PC-3 (cell line): ENCODE measurements at regions of chr9 and their contacts with region 1.

Region 1: GRCh38 chr9:120985810-120986222 is 59.2 kb upstream of the TRAF1 start:
- DNase-seq: peak; percentile 75
- ATAC-seq: peak; percentile 87
- H3K4me3 ChIP-seq: no peak overlapping the region
- H3K27ac ChIP-seq: no peak overlapping the region
- H3K4me1 ChIP-seq: no peaks in the 10 kb centered on the region; the same call in 1 of the 2 replicates
- H3K27me3 ChIP-seq: no peaks in the 10 kb centered on the region
- CTCF ChIP-seq: peak; percentile 75

Region 2: DNA sequence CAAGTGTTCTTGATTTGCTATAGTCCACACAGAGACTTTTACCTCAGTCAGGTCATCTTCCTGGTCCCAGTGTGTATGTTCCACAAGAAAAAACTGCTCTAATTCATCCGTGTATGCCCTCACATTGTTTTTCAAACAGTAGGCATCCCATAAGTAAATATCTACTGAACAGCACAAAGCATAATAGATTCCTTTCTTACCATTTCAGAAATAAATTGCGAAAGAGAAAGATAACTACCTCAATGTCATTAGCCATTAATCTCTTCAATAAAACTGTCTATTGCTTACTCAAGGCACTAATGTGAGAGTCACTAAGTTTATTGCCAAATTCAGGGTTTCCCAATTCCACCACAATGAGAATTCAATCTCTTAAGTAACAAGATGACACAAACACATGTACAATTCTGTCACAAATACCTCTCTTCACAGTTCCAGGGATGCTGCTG is 202.2 kb before region 1 on chr9:
- CTCF ChIA-PET with region 1: no interaction called
- POLR2A ChIA-PET with region 1: no interaction called
- intact Hi-C with region 1: no loop called
- DNase-seq: peak; percentile 62
- ATAC-seq: peak; percentile 40
- H3K4me3 ChIP-seq: no peak overlapping the region
- H3K27ac ChIP-seq: peak overlapping the region; percentile 50
- H3K4me1 ChIP-seq: peaks cover 6% of the 10 kb centered on the region; the same call in 1 of the 2 replicates
- H3K27me3 ChIP-seq: no peaks in the 10 kb centered on the region
- CTCF ChIP-seq: no peak

Region 3: DNA sequence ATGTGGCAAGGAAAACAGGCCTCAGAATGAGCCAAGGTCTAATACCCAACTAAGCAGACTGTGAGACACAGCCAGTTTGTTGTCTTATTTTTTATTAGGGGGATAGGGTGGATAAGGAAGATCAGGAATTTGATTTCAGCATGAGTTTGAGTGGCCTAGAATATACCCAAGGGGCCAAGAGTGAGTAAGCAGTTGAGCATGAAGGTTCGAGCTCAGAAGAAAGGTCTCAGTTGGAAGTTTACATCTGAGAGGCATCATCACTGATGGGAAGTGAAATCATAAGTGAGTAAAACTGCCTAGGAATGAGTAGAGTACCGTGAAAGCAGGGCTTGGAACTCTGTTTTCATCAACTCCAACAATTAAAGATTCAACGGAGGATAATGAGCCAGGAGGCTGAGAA is 155.7 kb before region 1 on chr9:
- CTCF ChIA-PET with region 1: no interaction called
- POLR2A ChIA-PET with region 1: no interaction called
- intact Hi-C with region 1: no loop called
- DNase-seq: no peak
- ATAC-seq: no peak
- H3K4me3 ChIP-seq: no peak overlapping the region
- H3K27ac ChIP-seq: no peak overlapping the region
- H3K4me1 ChIP-seq: no peaks in the 10 kb centered on the region
- H3K27me3 ChIP-seq: no peaks in the 10 kb centered on the region
- CTCF ChIP-seq: no peak

Region 4: DNA sequence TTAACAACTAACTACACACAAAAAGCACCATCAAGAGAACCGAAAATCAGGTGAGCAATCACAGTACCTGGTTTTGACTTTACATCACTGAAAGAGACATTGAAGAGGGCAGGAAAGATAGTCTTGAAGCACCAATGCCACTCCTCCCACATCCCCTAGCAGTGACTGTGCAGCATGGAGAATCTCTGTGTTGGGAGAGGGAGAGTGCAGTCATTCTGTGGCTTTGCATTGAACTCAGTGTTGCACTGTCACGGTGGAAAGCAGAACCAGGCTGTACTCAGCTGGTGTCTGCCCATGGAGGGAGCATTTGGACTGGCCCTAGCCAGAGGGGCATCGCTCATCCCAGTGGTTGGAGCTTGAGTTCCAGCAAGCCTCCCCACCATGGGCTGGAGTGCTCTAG is 23.8 kb after region 1 on chr9:
- CTCF ChIA-PET with region 1: no interaction called
- POLR2A ChIA-PET with region 1: no interaction called
- intact Hi-C with region 1: no loop called
- DNase-seq: no peak
- ATAC-seq: no peak
- H3K4me3 ChIP-seq: no peak overlapping the region
- H3K27ac ChIP-seq: no peak overlapping the region
- H3K4me1 ChIP-seq: no peaks in the 10 kb centered on the region
- H3K27me3 ChIP-seq: no peaks in the 10 kb centered on the region
- CTCF ChIP-seq: no peak

Region 5: DNA sequence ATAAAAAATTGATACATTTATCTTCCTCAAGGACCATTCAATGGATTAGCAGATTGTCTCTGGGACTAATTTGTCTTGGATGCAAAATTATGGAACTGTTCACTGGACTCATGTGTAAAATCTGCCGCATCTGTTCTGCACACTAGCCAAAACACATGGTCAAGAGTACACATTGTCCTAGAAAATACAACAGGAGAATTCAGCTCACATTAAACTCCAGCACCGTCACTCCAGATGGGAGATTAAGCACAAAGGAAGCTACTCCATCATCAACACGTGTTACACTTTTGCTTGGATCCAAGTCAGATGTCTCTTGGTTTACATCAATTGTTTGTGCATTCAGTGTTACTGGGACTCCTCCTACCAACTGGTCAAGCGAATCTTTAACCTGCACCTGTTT is 35.5 kb after region 1 on chr9:
- CTCF ChIA-PET with region 1: no interaction called
- POLR2A ChIA-PET with region 1: no interaction called
- intact Hi-C with region 1: loop called (anchors 2 kb)
- DNase-seq: no peak
- ATAC-seq: no peak
- H3K4me3 ChIP-seq: no peak overlapping the region
- H3K27ac ChIP-seq: no peak overlapping the region
- H3K4me1 ChIP-seq: peaks cover 18% of the 10 kb centered on the region
- H3K27me3 ChIP-seq: no peaks in the 10 kb centered on the region
- CTCF ChIP-seq: no peak

Region 6: DNA sequence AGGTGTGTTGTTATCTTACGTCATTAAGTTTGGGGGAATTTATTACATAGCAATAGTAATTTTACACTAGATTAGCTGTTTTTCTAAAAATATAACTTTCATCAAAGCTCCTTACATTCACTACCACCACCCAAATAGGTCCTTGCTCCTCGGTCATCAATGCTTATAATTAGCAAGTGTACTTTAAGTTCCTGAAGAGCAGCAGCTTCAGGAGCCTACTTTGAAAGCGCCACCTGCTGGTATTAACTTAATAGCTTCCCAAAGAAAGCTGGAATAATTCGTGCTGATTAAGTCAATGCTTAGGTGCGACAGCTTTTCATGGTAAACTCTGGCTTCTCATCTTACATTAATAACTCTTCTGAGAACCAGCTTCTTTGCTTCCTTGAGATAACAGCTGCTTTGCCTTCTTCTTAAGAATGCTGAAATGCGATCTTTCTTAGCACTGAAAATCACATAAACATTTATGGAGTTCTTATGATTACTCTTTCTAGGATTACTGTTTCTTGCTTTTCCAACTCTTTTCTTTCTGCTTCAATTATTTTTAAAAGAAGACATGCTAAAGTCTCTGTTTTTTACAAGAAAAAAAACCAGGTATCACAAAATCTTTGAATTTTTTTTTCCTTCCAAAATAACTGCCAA is 74.3 kb after region 1 on chr9:
- CTCF ChIA-PET with region 1: interaction called, 18 read pairs
- POLR2A ChIA-PET with region 1: interaction called, 5 read pairs
- intact Hi-C with region 1: loop called (anchors 1 kb)
- DNase-seq: peak; percentile 81
- ATAC-seq: peak; percentile 67
- H3K4me3 ChIP-seq: no peak overlapping the region
- H3K27ac ChIP-seq: no peak overlapping the region
- H3K4me1 ChIP-seq: no peaks in the 10 kb centered on the region
- H3K27me3 ChIP-seq: no peaks in the 10 kb centered on the region
- CTCF ChIP-seq: peak; percentile 78

Region 7: DNA sequence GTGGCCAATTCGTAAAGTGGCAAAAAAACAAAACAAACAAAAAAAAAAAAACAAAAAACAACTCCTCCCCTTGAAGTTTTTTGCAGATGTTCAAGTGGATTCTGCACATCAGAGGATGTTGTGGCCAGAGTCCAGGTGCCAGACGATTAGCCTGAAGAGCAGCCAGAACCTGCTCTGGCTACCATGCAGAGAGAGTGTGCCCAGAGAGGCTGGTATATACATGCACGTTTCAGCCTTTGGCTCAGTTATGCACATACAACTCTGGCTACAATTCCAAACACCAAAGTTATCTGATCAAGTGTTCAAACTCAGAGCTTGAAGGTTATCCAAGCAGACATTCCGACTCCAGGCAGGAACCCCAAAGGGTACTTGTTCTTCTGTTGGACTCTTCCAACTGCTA is 479.2 kb after region 1 on chr9:
- CTCF ChIA-PET with region 1: no interaction called
- POLR2A ChIA-PET with region 1: no interaction called
- intact Hi-C with region 1: no loop called
- DNase-seq: no peak
- ATAC-seq: no peak
- H3K4me3 ChIP-seq: no peak overlapping the region
- H3K27ac ChIP-seq: no peak overlapping the region
- H3K4me1 ChIP-seq: no peaks in the 10 kb centered on the region
- H3K27me3 ChIP-seq: peaks cover 9% of the 10 kb centered on the region
- CTCF ChIP-seq: no peak